Uterus (tissue), 4 donors: ENCODE measurements at regions of chr2 and their contacts with region 1.

Region 1: GRCh38 chr2:209029249-209029648 is 394.6 kb upstream of the MAP2 start:
- DNase-seq: no peak
- H3K4me3 ChIP-seq: no peak overlapping the region
- H3K27ac ChIP-seq: no peak overlapping the region
- H3K4me1 ChIP-seq: no peaks in the 10 kb centered on the region
- H3K27me3 ChIP-seq: no peaks in the 10 kb centered on the region
- CTCF ChIP-seq: no peak
- POLR2A ChIP-seq: no peak

Region 2: GRCh38 chr2:208906330-208906729 is 122.9 kb before region 1 on chr2:
- intact Hi-C with region 1: no loop called
- DNase-seq: no peak
- H3K4me3 ChIP-seq: no peak overlapping the region
- H3K27ac ChIP-seq: no peak overlapping the region
- H3K4me1 ChIP-seq: no peaks in the 10 kb centered on the region
- H3K27me3 ChIP-seq: no peaks in the 10 kb centered on the region
- CTCF ChIP-seq: no peak
- POLR2A ChIP-seq: no peak

Region 3: DNA sequence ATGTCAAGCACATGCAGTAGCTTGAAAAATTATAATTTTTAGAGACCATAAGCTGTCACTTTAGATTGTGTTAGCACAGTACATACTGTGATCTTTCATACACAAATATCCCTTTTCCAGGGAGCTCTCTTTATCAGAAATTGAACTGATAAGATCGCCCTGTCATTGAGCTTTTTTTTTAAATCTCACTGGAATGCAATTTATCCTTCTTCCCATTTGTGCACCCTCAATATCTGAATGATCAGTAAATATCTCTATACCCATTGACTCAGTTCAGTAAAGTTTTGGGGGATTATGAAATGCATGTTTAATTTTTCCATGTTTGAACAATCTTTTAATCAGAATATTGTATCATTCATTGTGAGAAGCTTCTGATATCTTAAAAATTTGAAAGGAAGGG is 13.0 kb before region 1 on chr2:
- intact Hi-C with region 1: loop called (anchors 1 kb)
- DNase-seq: no peak
- H3K4me3 ChIP-seq: no peak overlapping the region
- H3K27ac ChIP-seq: no peak overlapping the region
- H3K4me1 ChIP-seq: no peaks in the 10 kb centered on the region
- H3K27me3 ChIP-seq: no peaks in the 10 kb centered on the region
- CTCF ChIP-seq: no peak
- POLR2A ChIP-seq: no peak

Region 4: DNA sequence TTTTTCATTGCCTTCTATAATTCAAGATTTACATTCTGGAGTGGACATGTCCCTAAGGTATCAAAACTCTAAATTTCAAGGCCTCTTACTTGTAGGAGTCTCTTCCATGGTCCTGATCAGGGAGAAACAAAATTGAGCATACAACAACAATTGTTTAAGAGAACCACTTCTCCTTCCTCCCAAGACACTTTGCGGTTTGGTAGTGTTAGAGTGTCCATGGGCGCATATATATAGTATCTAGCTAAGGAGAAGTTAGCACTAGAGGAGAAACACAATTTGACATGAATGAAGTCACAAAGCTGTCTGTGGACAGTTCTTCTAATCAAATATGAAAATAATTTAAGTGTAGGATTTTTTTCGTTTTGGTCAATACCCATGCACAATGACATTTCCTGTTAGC is 45.5 kb after region 1 on chr2:
- intact Hi-C with region 1: no loop called
- DNase-seq: no peak
- H3K4me3 ChIP-seq: no peak overlapping the region
- H3K27ac ChIP-seq: no peak overlapping the region
- H3K4me1 ChIP-seq: no peaks in the 10 kb centered on the region
- H3K27me3 ChIP-seq: no peaks in the 10 kb centered on the region
- CTCF ChIP-seq: no peak
- POLR2A ChIP-seq: no peak

Region 5: GRCh38 chr2:210158236-210158635 is 1129.0 kb after region 1 on chr2:
- intact Hi-C with region 1: no loop called
- DNase-seq: no peak
- H3K4me3 ChIP-seq: no peak overlapping the region
- H3K27ac ChIP-seq: no peak overlapping the region
- H3K4me1 ChIP-seq: no peaks in the 10 kb centered on the region
- H3K27me3 ChIP-seq: no peaks in the 10 kb centered on the region
- CTCF ChIP-seq: no peak
- POLR2A ChIP-seq: no peak